K562 (cell line): ENCODE measurements at regions of chr4 and their contacts with region 1.

Region 1: DNA sequence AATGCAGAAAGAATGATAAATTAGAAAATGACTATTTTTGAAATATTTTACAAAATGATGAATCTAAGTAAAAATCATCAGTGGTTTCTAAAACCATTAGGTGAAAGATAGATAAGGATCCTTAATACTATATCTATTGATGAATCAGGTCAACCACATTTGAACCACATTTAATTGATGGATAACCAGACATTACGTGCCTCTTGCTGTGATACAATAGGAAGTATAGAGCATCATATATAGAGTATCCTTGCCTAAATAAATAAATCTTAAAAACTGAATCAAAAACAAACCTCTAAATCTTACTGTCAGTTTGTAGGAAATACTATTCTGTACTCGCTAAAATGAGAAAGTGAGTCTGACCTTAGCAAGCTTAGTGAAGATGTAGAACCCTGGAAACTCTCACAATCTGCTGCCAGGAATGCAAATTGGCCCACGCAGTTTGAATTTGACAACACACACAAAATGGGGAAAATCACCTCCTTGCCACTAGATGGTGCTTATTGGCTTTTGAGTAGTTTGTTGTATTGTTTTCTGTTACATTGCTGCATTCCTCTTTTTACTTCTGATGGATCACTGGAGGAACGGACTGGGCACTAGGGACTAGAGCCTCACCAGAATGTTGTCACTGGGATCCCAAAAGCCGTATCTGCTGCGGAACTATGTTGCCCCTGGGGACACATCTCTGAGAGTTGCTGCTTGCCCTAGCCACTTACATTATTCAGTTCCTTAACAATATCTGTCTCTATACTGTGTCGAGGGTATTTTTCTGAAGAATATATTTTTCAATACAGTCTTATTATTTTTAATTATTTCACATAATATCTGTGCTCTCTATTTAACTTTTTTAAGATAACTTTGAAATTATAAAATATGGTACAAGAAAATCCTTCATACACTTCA is 25.4 kb upstream of the SLAIN2 start:
- DNase-seq: peak; percentile 41 to 73 (median 46)
- ATAC-seq: peak; percentile 93
- H3K4me3 ChIP-seq: no peak overlapping the region
- H3K27ac ChIP-seq: no peak overlapping the region
- H3K4me1 ChIP-seq: no peaks in the 10 kb centered on the region; a peak in 1 of 5 replicates
- H3K27me3 ChIP-seq: no peaks in the 10 kb centered on the region
- CTCF ChIP-seq: peak; percentile 64 to 80 (median 77)
- EP300 ChIP-seq: 0 out of 2 replicates have a peak, but pooled peaks have one; percentile 24
- POLR2A ChIP-seq: no peak
- RAD21 ChIP-seq: peak; percentile 77 to 90

Region 2: DNA sequence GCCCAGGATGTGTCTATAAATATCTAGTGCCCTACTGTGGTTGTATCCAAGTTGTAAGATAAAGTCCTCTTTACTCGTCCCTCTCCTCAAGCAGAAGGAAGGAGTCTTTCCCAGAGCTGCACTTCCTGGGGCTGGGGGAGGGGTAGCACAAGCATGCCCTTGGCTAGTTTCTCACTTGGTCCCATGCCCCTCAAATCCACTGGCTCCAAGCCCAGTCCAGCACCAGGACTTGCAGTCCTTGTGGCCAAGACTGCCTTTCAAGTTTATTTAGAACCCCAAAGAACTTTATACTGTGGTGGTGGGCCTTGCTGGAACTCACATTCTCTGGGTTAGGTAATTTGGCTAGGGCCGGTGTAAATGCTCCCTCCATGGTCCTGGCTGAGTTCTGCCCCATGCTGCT is 124.0 kb after region 1 on chr4:
- CTCF ChIA-PET with region 1: no interaction called
- POLR2A ChIA-PET with region 1: no interaction called
- in situ Hi-C with region 1: no loop called
- intact Hi-C with region 1: loop called (anchors 10 kb)
- DNase-seq: no peak
- ATAC-seq: peak; percentile 36
- H3K4me3 ChIP-seq: no peak overlapping the region
- H3K27ac ChIP-seq: no peak overlapping the region
- H3K4me1 ChIP-seq: peaks cover 0 to 7% of the 10 kb centered on the region in 2 experiments; a peak in 2 of 5 replicates
- H3K27me3 ChIP-seq: no peaks in the 10 kb centered on the region
- CTCF ChIP-seq: no peak
- EP300 ChIP-seq: no peak
- POLR2A ChIP-seq: no peak
- RAD21 ChIP-seq: no peak